ENCODE measurements at regions of chr6 and their contacts with region 1.

Region 1: DNA sequence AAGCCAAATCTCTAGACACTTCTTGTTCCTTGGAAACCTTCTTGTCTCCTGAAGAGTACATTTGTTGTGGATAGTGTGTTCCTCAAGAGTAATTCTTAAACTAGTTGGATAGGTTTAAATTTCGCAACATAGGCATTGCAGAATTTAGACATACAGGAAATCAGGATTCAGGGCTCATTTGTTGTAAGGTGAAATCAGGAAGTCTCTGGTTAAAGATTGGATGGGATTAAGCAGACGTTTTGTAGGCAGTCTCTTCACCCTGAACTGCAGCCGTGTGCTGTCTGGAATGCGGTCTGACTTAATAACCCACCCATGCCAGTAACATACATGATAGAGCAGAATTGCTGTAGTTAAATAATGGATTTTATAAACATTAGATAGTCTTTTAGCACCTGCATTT is 21.7 kb downstream of the HIVEP1 start:
- DNase-seq: no peak

Region 2: DNA sequence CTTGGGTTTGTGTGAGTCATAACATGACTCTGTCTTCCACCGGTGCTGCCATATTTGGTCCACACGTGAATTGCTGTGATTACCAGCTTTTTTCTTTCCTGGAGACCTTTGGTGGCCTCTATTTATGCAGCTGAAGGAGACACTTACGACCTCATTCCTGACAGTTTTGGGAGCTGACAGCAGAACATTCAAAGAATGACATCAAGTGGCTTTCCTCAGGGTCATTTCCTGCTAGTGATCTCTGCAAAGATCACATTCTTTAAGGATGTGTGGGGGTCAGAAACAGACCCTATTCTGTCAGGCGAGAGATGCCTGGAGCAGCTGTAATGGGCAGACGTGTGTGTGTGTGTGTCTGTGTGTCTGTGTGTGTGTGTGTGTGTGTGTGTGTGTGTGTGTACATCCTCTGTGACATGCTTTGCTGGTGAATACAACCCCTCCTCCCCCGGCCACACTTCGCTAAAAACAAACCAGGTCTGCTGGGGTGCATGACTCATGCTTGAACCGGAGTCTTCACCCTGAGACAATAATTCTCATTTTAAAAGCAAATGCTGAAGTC is 380.7 kb before region 1 on chr6:
- intact Hi-C with region 1: loop called (anchors 10 kb)
- DNase-seq: peak in 1 of 10 donors; percentile 66

Region 3: GRCh38 chr6:11805261-11806053 is 228.3 kb before region 1 on chr6:
- intact Hi-C with region 1: no loop called
- DNase-seq: no peak

Measured in posterior cingulate gyrus (tissue), 11 donors.